A549 (cell line): ENCODE measurements at regions of chr14 and their contacts with region 1.

Region 1: DNA sequence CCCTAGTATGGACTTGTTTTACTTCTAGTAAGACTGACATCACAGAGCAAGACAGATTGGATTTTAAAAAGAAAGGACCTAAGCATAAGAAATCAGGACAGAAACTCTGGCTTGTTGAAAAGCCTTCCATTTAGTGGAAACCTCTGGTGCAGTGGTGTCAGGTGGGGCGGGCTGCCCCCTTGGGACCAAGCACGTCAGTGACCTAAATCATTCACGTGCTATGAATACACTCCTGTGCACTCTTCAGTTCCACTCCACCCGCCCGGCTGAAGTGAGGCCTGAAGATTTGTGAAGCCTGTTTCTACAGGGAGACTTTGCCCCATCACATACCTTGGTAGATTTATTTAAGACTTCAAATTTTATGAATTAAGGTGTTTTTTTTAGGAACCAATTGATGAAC is 58.2 kb upstream of the STRN3 start:
- DNase-seq: no peak
- ATAC-seq: no peak; a peak in 1 of 6 replicates
- H3K4me3 ChIP-seq: no peak overlapping the region
- H3K27ac ChIP-seq: no peak overlapping the region
- H3K4me1 ChIP-seq: peaks cover 11% of the 10 kb centered on the region
- CTCF ChIP-seq: no peak
- EP300 ChIP-seq: no peak
- POLR2A ChIP-seq: no peak
- RAD21 ChIP-seq: peak in 1 of 2 experiments; percentile 12; a peak in 1 of 5 replicates

Region 2: GRCh38 chr14:30982533-30982932 is 101.9 kb before region 1 on chr14:
- CTCF ChIA-PET with region 1: interaction called, 68 read pairs
- POLR2A ChIA-PET with region 1: no interaction called
- DNase-seq: no peak
- ATAC-seq: no peak
- H3K4me3 ChIP-seq: no peak overlapping the region
- H3K27ac ChIP-seq: no peak overlapping the region
- H3K4me1 ChIP-seq: peaks cover 18% of the 10 kb centered on the region
- CTCF ChIP-seq: no peak
- EP300 ChIP-seq: no peak
- POLR2A ChIP-seq: no peak
- RAD21 ChIP-seq: no peak

Region 3: GRCh38 chr14:31003284-31003683 is 81.1 kb before region 1 on chr14:
- CTCF ChIA-PET with region 1: interaction called, 10 read pairs
- POLR2A ChIA-PET with region 1: no interaction called
- DNase-seq: no peak
- ATAC-seq: no peak
- H3K4me3 ChIP-seq: no peak overlapping the region
- H3K27ac ChIP-seq: no peak overlapping the region
- H3K4me1 ChIP-seq: peaks cover 9% of the 10 kb centered on the region
- CTCF ChIP-seq: no peak
- EP300 ChIP-seq: no peak
- POLR2A ChIP-seq: no peak
- RAD21 ChIP-seq: no peak

Region 4: GRCh38 chr14:31829379-31829816 is 745.0 kb after region 1 on chr14:
- CTCF ChIA-PET with region 1: no interaction called
- POLR2A ChIA-PET with region 1: no interaction called
- DNase-seq: peak in 1 of 2 experiments; percentile 20
- ATAC-seq: no peak
- H3K4me3 ChIP-seq: no peak overlapping the region
- H3K27ac ChIP-seq: no peak overlapping the region
- H3K4me1 ChIP-seq: peaks cover 4% of the 10 kb centered on the region; the same call in 1 of the 3 replicates
- CTCF ChIP-seq: no peak
- EP300 ChIP-seq: no peak
- POLR2A ChIP-seq: no peak
- RAD21 ChIP-seq: no peak